ENCODE measurements at regions of chr15 and their contacts with region 1.

Region 1: DNA sequence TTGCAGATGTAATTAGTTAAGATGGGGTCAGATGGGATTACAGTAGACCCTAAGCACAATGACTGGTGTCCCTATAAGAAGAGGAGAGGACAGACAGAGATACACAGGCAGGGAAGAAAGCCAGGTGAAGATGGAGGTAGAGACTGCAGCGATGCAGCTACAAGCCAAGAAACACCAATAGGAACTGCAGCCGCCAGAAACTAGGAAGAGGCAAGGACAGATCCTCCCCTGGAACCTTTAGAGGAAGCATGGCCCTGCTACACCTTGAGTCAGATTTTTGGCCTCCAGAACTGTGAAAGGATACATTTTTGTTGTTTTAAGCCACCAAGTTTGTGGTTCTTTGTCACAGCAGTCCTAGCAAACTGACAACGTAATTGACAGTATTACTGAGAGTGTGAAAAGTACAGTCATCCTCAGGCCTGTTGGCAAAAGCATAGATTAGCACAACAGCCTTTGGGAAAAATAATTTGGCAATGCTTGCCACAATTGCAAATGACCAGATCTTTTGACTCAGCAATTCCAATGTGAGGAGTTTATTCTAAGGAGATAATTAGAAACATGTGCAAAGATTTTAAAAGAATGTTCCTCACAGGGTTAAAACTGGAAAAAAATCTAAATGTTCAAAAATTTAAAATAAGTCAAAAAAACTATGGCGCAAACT is 82.6 kb upstream of the TJP1 start:
- DNase-seq: no peak
- H3K4me3 ChIP-seq: no peak overlapping the region
- H3K27ac ChIP-seq: peak overlapping the region in 9 of 59 donors; percentile 2 to 56 (median 24)
- H3K27me3 ChIP-seq: no peaks in the 10 kb centered on the region
- CTCF ChIP-seq: no peak

Region 2: GRCh38 chr15:29143909-29144308 is 761.0 kb before region 1 on chr15:
- intact Hi-C with region 1: no loop called
- DNase-seq: no peak
- H3K4me3 ChIP-seq: no peak overlapping the region
- H3K27ac ChIP-seq: no peak overlapping the region
- H3K27me3 ChIP-seq: no peaks in the 10 kb centered on the region
- CTCF ChIP-seq: no peak

Region 3: DNA sequence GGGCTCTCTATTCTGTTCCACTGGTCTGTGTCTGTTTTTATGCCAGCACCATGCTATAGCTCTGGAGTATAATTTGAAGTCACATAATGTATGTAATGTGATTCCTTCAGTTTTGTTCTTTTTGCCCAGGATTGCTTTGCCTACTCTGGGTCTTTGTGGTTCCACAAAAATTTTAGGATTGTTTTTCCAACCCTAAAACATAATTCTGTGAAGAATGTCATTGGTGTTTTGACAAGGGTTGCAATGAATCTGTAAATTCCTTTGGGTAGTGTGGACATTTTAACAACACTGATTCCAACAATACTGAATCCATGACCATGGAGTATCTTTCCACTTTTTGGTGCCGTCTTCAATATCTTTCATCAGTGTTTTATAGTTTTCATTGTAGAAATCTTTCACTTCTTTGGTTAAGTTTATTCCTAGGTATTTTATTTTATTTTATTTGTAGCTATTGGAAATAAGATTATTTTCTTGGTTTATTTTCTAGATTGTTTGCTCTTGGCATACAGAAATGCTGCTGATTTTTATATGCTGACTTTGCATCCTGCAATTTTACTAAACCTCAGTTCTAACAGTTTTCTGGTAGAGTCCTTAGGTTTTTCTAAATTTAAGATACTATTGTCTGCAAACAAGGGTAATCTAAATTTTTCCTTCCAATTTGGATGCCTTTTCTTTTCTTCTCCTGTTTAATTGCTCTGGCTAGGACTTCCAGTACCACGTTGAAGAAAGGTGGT is 112.3 kb before region 1 on chr15:
- intact Hi-C with region 1: no loop called
- DNase-seq: no peak
- H3K4me3 ChIP-seq: no peak overlapping the region
- H3K27ac ChIP-seq: no peak overlapping the region
- H3K27me3 ChIP-seq: no peaks in the 10 kb centered on the region
- CTCF ChIP-seq: no peak

Region 4: GRCh38 chr15:29815000-29815710 is 89.7 kb before region 1 on chr15:
- intact Hi-C with region 1: loop called in 1 of 2 experiments (anchors 5 kb)
- DNase-seq: no peak
- H3K4me3 ChIP-seq: no peak overlapping the region
- H3K27ac ChIP-seq: peak overlapping the region in 19 of 59 donors; percentile 1 to 58 (median 17)
- H3K27me3 ChIP-seq: no peaks in the 10 kb centered on the region
- CTCF ChIP-seq: peak in 1 of 56 donors; percentile 26

Region 5: GRCh38 chr15:29978411-29979382 is 73.8 kb after region 1 on chr15:
- intact Hi-C with region 1: no loop called
- DNase-seq: no peak
- H3K4me3 ChIP-seq: peak overlapping the region in 13 of 59 donors; percentile 2 to 35 (median 9)
- H3K27ac ChIP-seq: peak overlapping the region; percentile 44 to 97 (median 85)
- H3K27me3 ChIP-seq: no peaks in the 10 kb centered on the region
- CTCF ChIP-seq: no peak

Region 6: GRCh38 chr15:31215490-31216214 is 1310.8 kb after region 1 on chr15:
- intact Hi-C with region 1: no loop called
- DNase-seq: peak in 9 of 10 donors; percentile 55 to 83 (median 70)
- H3K4me3 ChIP-seq: peak overlapping the region; percentile 53 to 84 (median 72)
- H3K27ac ChIP-seq: peak overlapping the region; percentile 72 to 98 (median 94)
- H3K27me3 ChIP-seq: no peaks in the 10 kb centered on the region
- CTCF ChIP-seq: peak; percentile 37 to 95 (median 84)

Measured in dorsolateral prefrontal cortex (tissue), 120 donors.